Prostate gland (tissue), 2 donors: ENCODE measurements at regions of chr2 and their contacts with region 1.

Region 1: DNA sequence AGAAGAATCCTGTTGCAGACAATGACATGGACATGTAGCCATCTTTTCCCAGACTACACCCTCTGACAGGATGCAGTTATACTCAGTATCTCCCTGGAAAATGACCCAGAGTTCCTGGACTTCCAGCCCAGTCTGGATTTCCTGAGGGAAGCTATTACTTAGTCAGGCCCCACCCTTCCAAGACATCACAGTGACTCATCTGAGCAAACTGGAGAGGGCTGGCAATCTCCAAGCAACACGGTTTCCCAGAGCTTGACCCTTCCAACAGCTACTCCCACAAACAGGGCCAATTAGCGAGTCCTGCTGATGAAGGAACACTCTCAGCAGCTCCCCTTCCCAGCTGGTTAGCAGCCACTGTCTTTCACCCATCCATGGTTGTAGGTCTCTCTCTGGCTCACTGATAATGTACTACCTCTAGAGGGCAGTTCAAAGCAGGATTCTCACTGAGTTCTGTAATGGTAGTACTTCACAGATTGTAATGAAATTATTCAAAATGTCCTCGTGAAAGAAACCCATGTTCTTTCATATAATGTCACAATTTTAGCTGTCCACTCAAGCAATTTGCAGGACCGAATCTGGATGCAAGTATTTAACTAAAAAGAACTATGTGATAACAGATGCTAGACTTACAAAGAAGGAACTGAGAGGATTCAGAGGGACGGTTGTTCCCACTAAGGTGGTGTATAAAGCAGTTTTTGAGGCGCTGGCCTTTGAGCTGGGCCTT is 110.2 kb downstream of the MDH1 start:
- DNase-seq: peak; percentile 11
- H3K4me3 ChIP-seq: no peak overlapping the region
- H3K27ac ChIP-seq: no peak overlapping the region
- H3K4me1 ChIP-seq: no peaks in the 10 kb centered on the region
- H3K27me3 ChIP-seq: no peaks in the 10 kb centered on the region
- CTCF ChIP-seq: peak in 3 of 4 experiments; percentile 33 to 58 (median 49)
- POLR2A ChIP-seq: no peak

Region 2: GRCh38 chr2:63861220-63861822 is 162.3 kb after region 1 on chr2:
- intact Hi-C with region 1: loop called (anchors 5 kb)
- DNase-seq: peak; percentile 29
- H3K4me3 ChIP-seq: no peak overlapping the region
- H3K27ac ChIP-seq: no peak overlapping the region
- H3K4me1 ChIP-seq: peaks cover 2% of the 10 kb centered on the region
- H3K27me3 ChIP-seq: no peaks in the 10 kb centered on the region
- CTCF ChIP-seq: peak in 3 of 4 experiments; percentile 43 to 60 (median 53)
- POLR2A ChIP-seq: no peak

Region 3: GRCh38 chr2:64839844-64840243 is 1140.9 kb after region 1 on chr2:
- intact Hi-C with region 1: no loop called
- DNase-seq: no peak
- H3K4me3 ChIP-seq: no peak overlapping the region
- H3K27ac ChIP-seq: no peak overlapping the region
- H3K4me1 ChIP-seq: no peaks in the 10 kb centered on the region
- H3K27me3 ChIP-seq: no peaks in the 10 kb centered on the region
- CTCF ChIP-seq: no peak
- POLR2A ChIP-seq: no peak